ENCODE measurements at regions of chr1 and their contacts with region 1.

Region 1: DNA sequence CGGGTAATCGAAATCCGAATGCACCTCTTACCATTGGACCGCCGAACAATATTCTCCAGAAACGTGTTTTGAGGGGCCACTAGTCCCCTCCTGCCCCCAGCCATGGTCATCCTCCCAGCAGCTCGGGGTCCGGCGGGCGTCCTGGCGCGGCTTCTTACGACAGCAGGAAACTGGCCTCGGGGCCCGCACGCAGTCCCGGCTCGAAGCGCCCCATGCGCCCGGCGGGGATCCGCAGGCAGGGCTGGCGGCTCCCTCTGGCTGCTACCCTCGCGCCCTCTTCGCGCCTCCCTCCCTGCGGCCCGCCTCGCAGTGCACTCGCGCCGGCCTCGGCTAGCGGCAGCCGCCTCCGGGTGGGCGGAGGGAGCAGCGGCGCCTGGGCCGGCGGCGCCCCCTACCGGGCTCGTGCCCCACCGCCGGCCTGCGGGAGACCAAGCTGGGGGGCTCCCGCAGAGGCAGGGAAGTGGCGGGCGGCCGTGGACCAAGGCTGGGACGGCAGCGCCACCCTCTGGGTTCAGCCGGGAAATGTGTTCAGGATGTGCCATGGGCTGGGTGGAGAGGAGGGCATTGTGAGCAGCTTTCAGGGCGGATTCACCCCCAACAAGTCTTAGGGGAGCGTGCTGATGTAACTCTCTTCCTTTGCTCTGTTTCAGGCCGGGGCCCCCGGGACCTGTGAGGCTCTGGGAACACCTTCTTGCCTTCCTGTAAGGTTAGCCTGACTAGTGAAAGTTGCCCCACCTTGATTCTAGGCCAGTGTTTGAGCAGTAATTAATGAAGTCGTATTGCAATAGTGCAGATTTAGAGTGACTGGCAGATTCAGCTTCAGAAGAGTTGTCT is at the start of gene KCNH1:
- DNase-seq: peak; percentile 16 to 59
- ATAC-seq: peak; percentile 68 to 72
- H3K4me3 ChIP-seq: peak within 1 kb of the TSS; percentile 40 to 56 (median 49)
- H3K27ac ChIP-seq: no peak within 1 kb of the TSS
- H3K4me1 ChIP-seq: peaks cover 0 to 9% of the 10 kb centered on the region in 2 donors
- H3K27me3 ChIP-seq: peaks cover 12 to 43% (median 23%) of the 10 kb centered on the region in 3 donors
- CTCF ChIP-seq: peak; percentile 51 to 87 (median 69)
- POLR2A ChIP-seq: no peak
- total RNA-seq, gene KCNH1: 0.29 to 0.67 (median 0.38) TPM

Region 2: GRCh38 chr1:210400043-210400840 is 733.8 kb before region 1 on chr1:
- in situ Hi-C with region 1: loop called (anchors 10 to 25 kb)
- intact Hi-C with region 1: no loop called
- DNase-seq: no peak
- ATAC-seq: no peak
- H3K4me3 ChIP-seq: no peak overlapping the region
- H3K27ac ChIP-seq: no peak overlapping the region
- H3K4me1 ChIP-seq: no peaks in the 10 kb centered on the region
- H3K27me3 ChIP-seq: no peaks in the 10 kb centered on the region
- CTCF ChIP-seq: peak in 4 of 5 experiments; percentile 15 to 61 (median 50)
- POLR2A ChIP-seq: no peak

Region 3: GRCh38 chr1:210407207-210407886 is 726.7 kb before region 1 on chr1:
- in situ Hi-C with region 1: loop called (anchors 10 to 25 kb)
- intact Hi-C with region 1: loop called (anchors 1 kb)
- DNase-seq: peak in 1 of 2 donors; percentile 28
- ATAC-seq: peak in 1 of 2 donors; percentile 49
- H3K4me3 ChIP-seq: no peak overlapping the region
- H3K27ac ChIP-seq: no peak overlapping the region
- H3K4me1 ChIP-seq: no peaks in the 10 kb centered on the region
- H3K27me3 ChIP-seq: no peaks in the 10 kb centered on the region
- CTCF ChIP-seq: peak; percentile 58 to 90 (median 72)
- POLR2A ChIP-seq: no peak

Region 4: DNA sequence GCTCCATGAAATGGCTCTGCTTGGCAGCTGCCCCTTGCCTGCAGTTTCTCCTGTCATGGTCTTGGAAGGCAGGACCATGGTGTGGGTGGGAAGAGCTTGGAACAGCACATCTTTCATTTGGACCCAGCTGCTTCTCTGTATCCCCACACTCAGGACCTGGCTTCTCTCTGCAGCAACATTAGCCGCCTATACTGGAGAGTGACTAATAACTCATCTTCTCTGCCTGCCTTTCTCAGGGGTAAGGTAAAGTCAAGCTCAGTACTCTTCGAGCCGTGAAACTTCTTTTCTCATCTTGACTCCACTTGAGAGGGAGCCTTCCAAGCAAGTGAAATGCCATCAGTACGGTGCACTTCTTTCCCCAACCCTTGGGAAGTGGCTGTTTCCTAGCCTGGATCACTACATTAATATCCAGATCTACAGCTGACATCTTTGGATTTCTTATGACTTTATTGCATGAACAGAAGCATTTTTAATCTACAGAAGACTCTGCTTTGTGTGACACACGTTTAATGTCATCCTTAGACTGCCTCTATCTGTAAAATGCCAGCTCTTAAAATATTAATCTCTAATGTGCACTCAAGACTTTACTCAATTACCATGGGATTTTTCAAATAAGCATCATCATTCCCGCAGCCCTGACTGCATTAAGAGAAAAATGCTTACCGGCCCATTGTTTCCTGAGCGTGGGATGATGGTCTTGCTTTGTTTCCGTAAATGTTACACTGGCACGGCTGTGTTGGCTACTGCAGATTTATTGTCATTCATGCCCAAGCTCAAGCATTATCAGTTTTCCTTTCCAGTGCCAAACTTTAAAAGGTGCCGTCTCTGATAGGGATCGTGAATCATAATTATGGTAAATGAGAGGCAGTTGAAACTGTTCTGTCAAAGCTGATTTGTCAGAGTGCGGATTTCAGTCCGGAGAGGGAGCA is 562.4 kb before region 1 on chr1:
- in situ Hi-C with region 1: loop called in 3 of 4 experiments (anchors 10 to 25 kb)
- intact Hi-C with region 1: no loop called
- DNase-seq: no peak
- ATAC-seq: no peak
- H3K4me3 ChIP-seq: no peak overlapping the region
- H3K27ac ChIP-seq: no peak overlapping the region
- H3K4me1 ChIP-seq: no peaks in the 10 kb centered on the region
- H3K27me3 ChIP-seq: no peaks in the 10 kb centered on the region
- CTCF ChIP-seq: no peak
- POLR2A ChIP-seq: no peak

Region 5: GRCh38 chr1:210584439-210585113 is 549.5 kb before region 1 on chr1:
- in situ Hi-C with region 1: loop called in 3 of 4 experiments (anchors 10 to 25 kb)
- intact Hi-C with region 1: loop called (anchors 1 kb)
- DNase-seq: peak; percentile 29 to 52
- ATAC-seq: peak; percentile 30 to 56
- H3K4me3 ChIP-seq: no peak overlapping the region
- H3K27ac ChIP-seq: no peak overlapping the region
- H3K4me1 ChIP-seq: no peaks in the 10 kb centered on the region
- H3K27me3 ChIP-seq: no peaks in the 10 kb centered on the region
- CTCF ChIP-seq: peak; percentile 11 to 50 (median 38)
- POLR2A ChIP-seq: no peak

Region 6: DNA sequence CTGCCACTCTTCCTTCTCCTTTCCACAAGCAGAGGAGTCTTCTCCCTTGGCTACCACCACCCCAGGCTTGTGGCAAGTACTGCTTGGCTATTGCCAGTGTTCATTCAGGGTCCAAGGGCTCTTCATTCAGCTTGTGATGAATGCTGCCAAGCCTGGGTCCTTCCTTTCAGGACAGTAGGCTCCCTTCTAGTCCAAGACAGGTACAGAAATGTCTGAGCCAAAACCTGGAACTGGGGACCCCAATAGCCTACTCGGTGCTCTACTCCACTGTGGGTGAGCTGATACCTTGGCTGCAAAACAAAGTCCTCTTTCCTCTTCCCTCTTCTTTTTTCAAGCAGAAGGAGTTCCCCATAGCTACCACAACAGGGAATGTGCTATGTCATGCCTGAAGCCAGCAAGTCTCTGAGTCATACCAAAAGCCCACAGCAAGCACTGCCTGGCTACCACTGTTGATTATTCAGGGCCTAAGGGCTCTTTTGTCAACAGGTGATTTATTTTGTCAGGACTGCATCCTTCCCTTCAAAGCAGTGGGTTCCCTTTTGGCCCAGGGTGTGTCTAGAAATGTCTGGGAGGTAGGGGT is 536.4 kb before region 1 on chr1:
- in situ Hi-C with region 1: loop called in 2 of 4 experiments (anchors 25 kb)
- intact Hi-C with region 1: loop called (anchors 5 kb)
- DNase-seq: peak in 1 of 2 donors; percentile 15
- ATAC-seq: peak in 1 of 2 donors; percentile 36
- H3K4me3 ChIP-seq: no peak overlapping the region
- H3K27ac ChIP-seq: peak overlapping the region; percentile 3 to 58 (median 18)
- H3K4me1 ChIP-seq: no peaks in the 10 kb centered on the region
- H3K27me3 ChIP-seq: no peaks in the 10 kb centered on the region
- CTCF ChIP-seq: no peak
- POLR2A ChIP-seq: no peak

Region 7: DNA sequence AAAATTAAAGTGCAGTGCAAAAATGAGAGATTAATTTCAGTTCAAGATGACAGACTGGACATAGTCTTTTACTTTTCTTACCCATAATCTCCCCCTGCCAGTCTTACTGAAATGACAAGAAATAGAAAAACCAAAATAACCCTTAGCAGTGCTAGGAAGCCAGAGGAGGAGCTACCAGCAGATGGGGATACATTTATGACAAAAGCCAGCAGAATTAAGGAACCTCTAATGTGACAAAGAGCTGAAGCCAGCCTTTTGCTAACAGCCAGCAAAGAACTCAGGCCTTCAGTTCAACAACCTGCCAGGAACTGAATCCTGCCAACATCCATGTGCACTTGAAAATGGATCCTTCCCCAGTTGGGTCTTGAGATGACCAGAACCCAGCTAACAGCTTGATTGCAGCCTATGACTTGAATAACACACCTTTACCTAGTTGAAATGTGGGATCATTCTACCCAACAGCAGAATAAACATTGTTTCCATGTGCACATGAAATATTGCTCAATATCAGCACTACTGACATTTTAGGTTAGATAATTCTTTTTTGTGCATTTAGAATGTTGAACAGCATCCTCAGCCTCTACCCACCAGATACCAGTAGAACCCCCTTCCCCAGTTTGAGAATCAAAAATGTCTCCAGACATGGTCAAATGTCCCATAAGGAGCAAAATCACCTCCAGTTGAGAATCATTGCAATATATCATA is 184.7 kb after region 1 on chr1:
- in situ Hi-C with region 1: no loop called
- intact Hi-C with region 1: no loop called
- DNase-seq: no peak
- ATAC-seq: no peak
- H3K4me3 ChIP-seq: no peak overlapping the region
- H3K27ac ChIP-seq: no peak overlapping the region
- H3K4me1 ChIP-seq: no peaks in the 10 kb centered on the region
- H3K27me3 ChIP-seq: no peaks in the 10 kb centered on the region
- CTCF ChIP-seq: no peak
- POLR2A ChIP-seq: no peak

Measured in gastrocnemius medialis (tissue), 4 donors.